ENCODE measurements at regions of chr1 and their contacts with region 1.

Region 1: GRCh38 chr1:118151312-118151937 is 33.6 kb downstream of the SPAG17 start:
- DNase-seq: peak; percentile 68
- ATAC-seq: no peak
- H3K4me3 Mint-ChIP-seq: no peak overlapping the region
- H3K27ac Mint-ChIP-seq: no peak overlapping the region
- H3K4me1 Mint-ChIP-seq: no peaks in the 10 kb centered on the region
- H3K27me3 Mint-ChIP-seq: no peaks in the 10 kb centered on the region

Region 2: GRCh38 chr1:119052267-119052666 is 900.8 kb after region 1 on chr1:
- CTCF ChIA-PET with region 1: no interaction called
- POLR2A ChIA-PET with region 1: no interaction called
- intact Hi-C with region 1: no loop called
- DNase-seq: no peak
- ATAC-seq: no peak
- H3K4me3 Mint-ChIP-seq: no peak overlapping the region
- H3K27ac Mint-ChIP-seq: no peak overlapping the region
- H3K4me1 Mint-ChIP-seq: no peaks in the 10 kb centered on the region
- H3K27me3 Mint-ChIP-seq: no peaks in the 10 kb centered on the region

Region 3: GRCh38 chr1:119275145-119276134 is 1124.0 kb after region 1 on chr1:
- CTCF ChIA-PET with region 1: no interaction called
- POLR2A ChIA-PET with region 1: no interaction called
- intact Hi-C with region 1: loop called in 1 of 2 experiments (anchors 10 kb)
- DNase-seq: peak; percentile 66
- ATAC-seq: peak; percentile 74
- H3K4me3 Mint-ChIP-seq: no peak overlapping the region
- H3K27ac Mint-ChIP-seq: no peak overlapping the region
- H3K4me1 Mint-ChIP-seq: no peaks in the 10 kb centered on the region
- H3K27me3 Mint-ChIP-seq: peaks cover 5% of the 10 kb centered on the region

Region 4: GRCh38 chr1:119384591-119384990 is 1233.2 kb after region 1 on chr1:
- CTCF ChIA-PET with region 1: no interaction called
- POLR2A ChIA-PET with region 1: no interaction called
- intact Hi-C with region 1: no loop called
- DNase-seq: no peak
- ATAC-seq: no peak
- H3K4me3 Mint-ChIP-seq: no peak overlapping the region
- H3K27ac Mint-ChIP-seq: no peak overlapping the region
- H3K4me1 Mint-ChIP-seq: no peaks in the 10 kb centered on the region
- H3K27me3 Mint-ChIP-seq: peaks cover 2% of the 10 kb centered on the region